MCF 10A (cell line): ENCODE measurements at regions of chr11 and their contacts with region 1.

Region 1: DNA sequence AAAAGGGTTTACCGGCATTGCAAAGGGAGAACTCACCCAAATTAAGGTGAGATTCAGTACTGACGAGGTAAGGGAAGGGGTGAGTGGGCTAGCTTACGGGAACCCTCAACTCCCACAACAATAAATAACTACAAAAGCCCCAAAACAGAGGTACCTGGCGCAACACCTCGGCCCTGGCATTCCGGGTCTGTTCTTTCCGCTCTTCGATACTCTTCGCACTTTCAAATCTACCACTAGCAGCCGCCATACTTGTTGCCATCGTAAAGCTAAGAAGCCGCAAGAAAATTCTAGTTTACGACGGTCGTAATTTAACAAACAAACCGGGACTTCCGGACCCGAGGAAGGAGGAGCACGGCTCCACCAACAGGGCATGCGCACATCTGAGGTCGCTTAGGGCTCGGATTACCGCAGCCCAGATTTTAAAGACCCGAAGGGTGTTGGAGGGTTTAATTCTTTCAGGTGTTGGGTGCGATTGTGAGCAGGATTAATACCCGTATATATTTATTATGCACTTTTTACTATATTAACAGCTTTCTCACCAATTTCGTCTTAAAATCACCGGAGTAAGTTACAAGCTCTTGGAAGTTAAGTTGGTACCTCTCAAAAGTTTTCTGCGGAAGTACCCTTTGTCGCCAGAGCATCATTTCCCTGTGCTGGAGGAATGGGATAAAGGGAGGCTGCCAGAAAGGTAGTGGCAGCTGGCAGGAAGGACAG is at the start of gene CWF19L2:
- DNase-seq: peak; percentile 95
- H3K4me3 Mint-ChIP-seq: peak within 1 kb of the TSS; percentile 91
- H3K27ac Mint-ChIP-seq: peak within 1 kb of the TSS; percentile 87
- H3K4me1 Mint-ChIP-seq: peaks cover 16% of the 10 kb centered on the region
- H3K27me3 Mint-ChIP-seq: peaks cover 10% of the 10 kb centered on the region
- CTCF ChIP-seq: no peak
- total RNA-seq, gene CWF19L2: 8.5 and 10.7 TPM in 2 replicates

Region 2: DNA sequence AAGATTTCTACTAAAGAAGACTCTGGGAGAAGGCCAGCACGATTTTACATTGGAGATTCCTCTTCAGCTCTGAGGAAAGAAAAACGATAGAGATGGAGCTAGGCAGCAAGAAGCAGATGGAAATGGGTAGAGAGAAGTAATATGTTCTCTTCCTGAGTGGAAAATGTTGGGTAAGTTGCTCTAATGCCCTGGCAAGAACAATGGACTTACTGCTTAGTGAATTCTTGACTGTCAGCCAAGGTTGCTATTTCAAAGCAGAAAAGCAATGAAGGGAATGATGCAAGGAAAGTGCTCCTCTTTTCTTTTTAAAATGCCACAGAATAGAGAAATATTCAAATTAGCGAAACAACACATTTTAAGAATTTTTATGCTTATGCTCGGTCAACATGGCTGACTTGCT is 38.3 kb after region 1 on chr11:
- CTCF ChIA-PET with region 1: no interaction called
- POLR2A ChIA-PET with region 1: interaction called, 23 read pairs
- intact Hi-C with region 1: no loop called
- DNase-seq: peak; percentile 57
- H3K4me3 Mint-ChIP-seq: no peak overlapping the region
- H3K27ac Mint-ChIP-seq: peak overlapping the region; percentile 5
- H3K4me1 Mint-ChIP-seq: peaks cover 23% of the 10 kb centered on the region
- H3K27me3 Mint-ChIP-seq: no peaks in the 10 kb centered on the region
- CTCF ChIP-seq: no peak